Body of pancreas (tissue), 4 donors: ENCODE measurements at regions of chr22 and their contacts with region 1.

Region 1: GRCh38 chr22:29245637-29246385 is 22.0 kb downstream of the RHBDD3 start:
- DNase-seq: peak; percentile 76 to 80 (median 78)
- ATAC-seq: peak; percentile 96
- H3K4me3 ChIP-seq: no peak overlapping the region
- H3K27ac ChIP-seq: no peak overlapping the region
- H3K4me1 ChIP-seq: no peaks in the 10 kb centered on the region
- H3K27me3 ChIP-seq: no peaks in the 10 kb centered on the region
- CTCF ChIP-seq: peak; percentile 91 to 97 (median 94)
- POLR2A ChIP-seq: no peak

Region 2: DNA sequence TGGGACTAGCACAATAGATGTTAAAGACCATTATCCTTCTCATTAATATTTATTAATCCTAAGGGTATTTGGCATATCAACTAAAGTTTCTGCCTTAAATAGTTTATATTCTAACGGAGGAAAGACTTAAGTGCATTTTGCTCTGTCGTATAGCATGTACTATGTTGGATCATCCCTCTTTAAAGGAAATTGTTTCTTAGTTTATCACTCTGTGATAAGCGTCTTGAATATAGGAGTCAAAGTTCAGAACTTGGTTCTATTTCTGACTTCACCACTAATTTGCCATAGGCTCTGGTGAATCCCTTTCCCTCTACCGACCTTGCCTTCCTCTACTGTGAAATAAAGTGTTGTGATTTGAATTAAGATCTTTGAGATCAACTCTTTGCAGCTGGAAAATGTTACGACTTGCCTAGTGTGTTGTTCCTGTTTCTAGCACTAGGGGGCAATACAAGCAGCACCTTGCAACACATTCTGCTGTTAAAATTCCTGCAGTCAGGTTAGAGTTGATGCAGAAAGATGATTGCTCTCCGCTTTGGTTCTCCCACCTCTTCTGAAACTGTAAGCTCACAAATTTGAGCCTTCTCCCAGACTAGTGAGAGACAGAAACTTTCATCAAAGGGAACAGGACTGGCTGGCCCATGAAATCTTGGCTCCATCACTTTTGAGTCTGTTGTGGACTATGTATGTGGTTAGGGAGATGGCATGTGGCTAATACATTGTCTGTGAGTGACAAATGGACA is 390.3 kb before region 1 on chr22:
- intact Hi-C with region 1: loop called (anchors 10 kb)
- DNase-seq: peak; percentile 58 to 67 (median 62)
- ATAC-seq: peak; percentile 86
- H3K4me3 ChIP-seq: no peak overlapping the region
- H3K27ac ChIP-seq: no peak overlapping the region
- H3K4me1 ChIP-seq: peaks cover 3% of the 10 kb centered on the region
- H3K27me3 ChIP-seq: no peaks in the 10 kb centered on the region
- CTCF ChIP-seq: peak; percentile 71 to 98 (median 96)
- POLR2A ChIP-seq: peak in 1 of 3 donors; percentile 8

Region 3: DNA sequence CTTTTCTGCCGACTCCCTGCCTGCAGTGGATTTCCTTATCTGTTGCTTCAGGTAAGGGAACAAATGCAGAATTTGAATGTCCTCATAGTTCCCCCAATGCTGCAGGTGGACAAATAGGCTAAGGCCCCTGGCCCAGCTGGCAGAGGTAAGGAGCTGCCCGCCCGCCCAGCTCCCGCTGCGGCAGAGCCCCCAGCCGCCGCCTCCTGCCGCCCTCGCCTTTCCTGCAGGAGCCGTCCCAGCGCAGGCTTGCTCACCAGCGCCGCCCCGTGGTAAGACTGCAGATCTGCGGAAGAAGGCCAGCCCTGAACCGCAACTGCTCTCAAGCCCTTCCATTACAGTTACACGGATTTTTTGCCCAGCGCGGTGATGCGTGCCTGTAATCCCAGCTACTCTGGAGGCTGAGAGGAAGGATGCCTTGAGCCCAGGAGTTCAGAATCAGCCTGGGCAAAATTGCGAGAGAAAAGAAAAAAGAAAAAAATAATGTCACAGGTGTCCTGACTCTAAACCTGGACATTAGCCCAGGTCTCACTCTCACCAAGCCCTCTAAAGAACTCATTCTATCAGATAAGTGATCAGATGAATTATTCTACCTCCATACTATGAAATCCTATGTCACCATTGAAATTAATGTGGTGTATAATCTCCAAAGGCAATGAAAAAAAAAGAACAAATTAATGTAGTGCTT is 91.3 kb before region 1 on chr22:
- intact Hi-C with region 1: loop called (anchors 10 kb)
- DNase-seq: peak; percentile 69 to 74 (median 72)
- ATAC-seq: peak; percentile 93
- H3K4me3 ChIP-seq: no peak overlapping the region
- H3K27ac ChIP-seq: no peak overlapping the region
- H3K4me1 ChIP-seq: peaks cover 10% of the 10 kb centered on the region
- H3K27me3 ChIP-seq: no peaks in the 10 kb centered on the region
- CTCF ChIP-seq: peak; percentile 84 to 95 (median 91)
- POLR2A ChIP-seq: no peak

Region 4: DNA sequence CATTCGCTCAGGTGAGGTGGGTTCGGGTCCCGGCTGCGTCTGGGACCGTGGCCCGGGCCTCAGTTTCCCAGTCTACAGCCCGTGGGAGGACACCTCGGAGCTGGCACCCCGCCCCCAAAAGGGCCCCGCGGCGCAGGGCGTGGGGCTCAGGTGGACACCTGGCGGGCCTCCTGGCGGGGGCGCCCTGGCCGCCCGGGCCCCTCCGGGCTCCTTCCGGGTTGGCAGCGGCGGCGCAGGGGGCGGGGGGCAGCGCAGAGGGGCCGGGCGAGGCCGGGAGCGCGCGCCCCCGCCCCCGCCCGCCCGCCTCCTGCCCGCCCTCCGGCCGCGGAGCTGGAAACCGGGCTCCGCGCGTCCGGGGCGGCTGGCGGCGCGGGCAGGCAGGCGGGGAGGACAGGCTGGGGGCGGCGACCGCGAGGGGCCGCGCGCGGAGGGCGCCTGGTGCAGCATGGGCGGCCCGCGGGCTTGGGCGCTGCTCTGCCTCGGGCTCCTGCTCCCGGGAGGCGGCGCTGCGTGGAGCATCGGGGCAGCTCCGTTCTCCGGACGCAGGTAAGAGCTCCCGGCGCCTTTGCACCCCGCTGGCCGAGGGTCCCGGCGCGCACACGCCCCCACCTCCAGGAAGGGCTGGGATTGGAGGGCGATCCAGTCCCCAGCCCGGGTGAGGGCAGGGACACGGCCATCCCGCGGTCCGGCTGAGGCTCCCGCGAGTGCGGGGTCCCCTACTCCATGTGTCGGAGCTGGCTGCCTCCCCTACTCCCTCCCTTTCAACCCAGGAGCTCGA is 40.0 kb before region 1 on chr22 and contains the start of gene EMID1:
- intact Hi-C with region 1: loop called (anchors 5 kb)
- DNase-seq: peak; percentile 60 to 75 (median 68)
- ATAC-seq: peak; percentile 69
- H3K4me3 ChIP-seq: peak within 1 kb of the TSS; percentile 23 to 50
- H3K27ac ChIP-seq: peak within 1 kb of the TSS in 3 of 4 donors; percentile 19 to 53 (median 41)
- H3K4me1 ChIP-seq: peaks cover 26% of the 10 kb centered on the region
- H3K27me3 ChIP-seq: no peaks in the 10 kb centered on the region
- CTCF ChIP-seq: peak in 5 of 7 experiments; percentile 11 to 49 (median 21)
- POLR2A ChIP-seq: no peak
- total RNA-seq, gene EMID1: 5.9 to 25.9 TPM

Region 5: DNA sequence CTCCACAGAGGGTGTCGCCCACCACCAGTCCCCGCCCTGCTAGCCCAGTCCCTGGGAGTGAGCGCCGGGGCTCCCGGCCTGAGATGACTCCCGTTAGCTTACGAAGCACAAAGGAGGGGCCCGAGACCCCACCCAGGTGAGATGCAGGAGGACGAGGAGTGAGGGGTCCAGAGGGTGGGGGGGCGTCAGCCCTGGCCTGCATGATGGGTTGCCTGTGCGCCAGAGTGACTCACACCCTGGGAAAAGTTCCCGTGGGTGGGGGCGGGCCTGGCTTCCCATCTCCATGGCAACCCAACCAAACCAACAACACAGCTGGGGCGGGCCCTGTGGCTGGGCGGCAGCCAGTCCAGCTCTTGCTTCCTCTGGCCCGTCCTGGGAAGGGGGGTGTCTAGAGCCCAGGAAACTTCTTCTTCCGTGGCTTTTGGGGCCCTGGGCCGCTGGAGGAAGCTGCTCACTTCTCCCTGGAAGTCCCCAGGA is 65.1 kb after region 1 on chr22:
- intact Hi-C with region 1: no loop called
- DNase-seq: peak; percentile 97 to 98 (median 97)
- ATAC-seq: peak; percentile 78
- H3K4me3 ChIP-seq: no peak overlapping the region
- H3K27ac ChIP-seq: peak overlapping the region in 3 of 4 donors; percentile 4 to 58 (median 47)
- H3K4me1 ChIP-seq: peaks cover 84% of the 10 kb centered on the region
- H3K27me3 ChIP-seq: peaks cover 0 to 23% of the 10 kb centered on the region in 2 donors
- CTCF ChIP-seq: no peak
- POLR2A ChIP-seq: no peak

Region 6: GRCh38 chr22:29679316-29679715 is 433.5 kb after region 1 on chr22:
- intact Hi-C with region 1: no loop called
- DNase-seq: no peak
- ATAC-seq: no peak
- H3K4me3 ChIP-seq: no peak overlapping the region
- H3K27ac ChIP-seq: no peak overlapping the region
- H3K4me1 ChIP-seq: no peaks in the 10 kb centered on the region
- H3K27me3 ChIP-seq: no peaks in the 10 kb centered on the region
- CTCF ChIP-seq: no peak
- POLR2A ChIP-seq: no peak